ENCODE measurements at regions of chr1 and their contacts with region 1.

Region 1: GRCh38 chr1:205591522-205592351 is 40.1 kb downstream of the ELK4 start:
- DNase-seq: peak; percentile 58 to 100
- H3K4me3 ChIP-seq: peak overlapping the region; percentile 26 to 57 (median 36); a peak in 5 of 8 replicates
- H3K27ac ChIP-seq: no peak overlapping the region
- H3K4me1 ChIP-seq: peaks cover 0 to 7% (median 4%) of the 10 kb centered on the region in 4 experiments; a peak in 5 of 7 replicates
- H3K27me3 ChIP-seq: 0 out of 7 replicates have a peak, but pooled peaks cover 0 to 2% (median 0%) of the 10 kb centered on the region in 4 experiments
- CTCF ChIP-seq: peak; percentile 91 to 99 (median 94)
- EP300 ChIP-seq: no peak
- POLR2A ChIP-seq: 0 out of 3 replicates have a peak, but pooled peaks of 1 of the 2 experiments have one; percentile 39
- RAD21 ChIP-seq: peak; percentile 98

Region 2: GRCh38 chr1:205137901-205138300 is 453.8 kb before region 1 on chr1:
- CTCF ChIA-PET with region 1: no interaction called
- POLR2A ChIA-PET with region 1: no interaction called
- DNase-seq: no peak
- H3K4me3 ChIP-seq: no peak overlapping the region
- H3K27ac ChIP-seq: no peak overlapping the region
- H3K4me1 ChIP-seq: peaks cover 0 to 3% (median 0%) of the 10 kb centered on the region in 4 experiments; a peak in 2 of 7 replicates
- H3K27me3 ChIP-seq: no peaks in the 10 kb centered on the region
- CTCF ChIP-seq: no peak
- EP300 ChIP-seq: no peak
- POLR2A ChIP-seq: no peak
- RAD21 ChIP-seq: no peak

Region 3: DNA sequence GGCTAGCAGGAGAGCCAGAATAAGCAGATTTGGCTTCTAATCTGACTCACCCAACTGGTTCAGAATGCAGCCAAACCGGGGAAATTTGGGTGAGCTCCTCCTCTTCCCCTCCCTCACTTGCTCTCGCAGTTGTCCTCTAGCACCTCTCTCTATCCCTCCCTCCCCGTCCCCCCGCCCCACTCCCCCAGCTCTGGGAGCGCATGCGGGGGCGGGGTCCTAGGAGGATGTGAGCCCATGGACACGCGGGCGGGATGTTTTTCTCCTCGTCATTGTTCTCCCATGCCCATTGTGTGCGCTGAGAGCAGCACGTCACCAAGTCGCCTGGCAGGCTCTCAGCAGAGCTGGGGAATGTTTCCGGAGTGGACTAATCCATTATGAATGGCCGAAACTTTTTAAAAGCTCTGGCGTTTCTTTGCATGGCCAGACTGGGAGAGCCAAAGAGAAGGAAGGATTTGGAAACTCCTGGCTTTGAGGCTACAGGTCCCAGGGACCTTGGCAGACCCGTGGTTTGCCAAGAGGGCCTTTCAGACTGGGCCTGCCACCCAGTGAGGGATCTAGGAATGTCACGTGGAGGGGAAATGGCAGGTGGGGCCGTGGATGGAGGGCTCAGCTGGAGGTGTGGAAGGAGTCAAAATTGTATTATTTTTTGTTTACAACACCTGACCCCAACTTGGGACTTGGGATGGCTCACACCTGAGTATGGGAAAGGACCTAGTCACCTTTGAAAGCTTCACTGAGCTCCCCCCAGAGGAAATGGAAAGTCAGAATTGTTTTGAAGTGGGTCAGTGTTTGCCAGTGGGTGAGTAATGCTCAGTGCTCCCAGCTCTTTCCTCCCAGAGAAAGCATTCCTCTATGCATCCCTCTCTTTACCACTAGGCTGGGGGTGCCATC is 48.1 kb before region 1 on chr1:
- CTCF ChIA-PET with region 1: interaction called, 13 read pairs
- POLR2A ChIA-PET with region 1: interaction called, 3 read pairs
- DNase-seq: peak; percentile 50 to 80
- H3K4me3 ChIP-seq: peak overlapping the region; percentile 12 to 52 (median 28); a peak in 7 of 8 replicates
- H3K27ac ChIP-seq: no peak overlapping the region; the same call in 1 of the 2 replicates
- H3K4me1 ChIP-seq: peaks cover 0 to 14% (median 7%) of the 10 kb centered on the region in 4 experiments; a peak in 5 of 7 replicates
- H3K27me3 ChIP-seq: peaks cover 0 to 26% (median 13%) of the 10 kb centered on the region in 4 experiments; a peak in 6 of 7 replicates
- CTCF ChIP-seq: no peak
- EP300 ChIP-seq: no peak
- POLR2A ChIP-seq: no peak
- RAD21 ChIP-seq: no peak

Region 4: GRCh38 chr1:205561501-205562203 is 30.1 kb before region 1 on chr1:
- CTCF ChIA-PET with region 1: interaction called, 11 read pairs
- POLR2A ChIA-PET with region 1: no interaction called
- DNase-seq: no peak
- H3K4me3 ChIP-seq: no peak overlapping the region
- H3K27ac ChIP-seq: no peak overlapping the region
- H3K4me1 ChIP-seq: no peaks in the 10 kb centered on the region
- H3K27me3 ChIP-seq: no peaks in the 10 kb centered on the region; a peak in 2 of 7 replicates
- CTCF ChIP-seq: no peak
- EP300 ChIP-seq: no peak
- POLR2A ChIP-seq: no peak
- RAD21 ChIP-seq: no peak

Region 5: DNA sequence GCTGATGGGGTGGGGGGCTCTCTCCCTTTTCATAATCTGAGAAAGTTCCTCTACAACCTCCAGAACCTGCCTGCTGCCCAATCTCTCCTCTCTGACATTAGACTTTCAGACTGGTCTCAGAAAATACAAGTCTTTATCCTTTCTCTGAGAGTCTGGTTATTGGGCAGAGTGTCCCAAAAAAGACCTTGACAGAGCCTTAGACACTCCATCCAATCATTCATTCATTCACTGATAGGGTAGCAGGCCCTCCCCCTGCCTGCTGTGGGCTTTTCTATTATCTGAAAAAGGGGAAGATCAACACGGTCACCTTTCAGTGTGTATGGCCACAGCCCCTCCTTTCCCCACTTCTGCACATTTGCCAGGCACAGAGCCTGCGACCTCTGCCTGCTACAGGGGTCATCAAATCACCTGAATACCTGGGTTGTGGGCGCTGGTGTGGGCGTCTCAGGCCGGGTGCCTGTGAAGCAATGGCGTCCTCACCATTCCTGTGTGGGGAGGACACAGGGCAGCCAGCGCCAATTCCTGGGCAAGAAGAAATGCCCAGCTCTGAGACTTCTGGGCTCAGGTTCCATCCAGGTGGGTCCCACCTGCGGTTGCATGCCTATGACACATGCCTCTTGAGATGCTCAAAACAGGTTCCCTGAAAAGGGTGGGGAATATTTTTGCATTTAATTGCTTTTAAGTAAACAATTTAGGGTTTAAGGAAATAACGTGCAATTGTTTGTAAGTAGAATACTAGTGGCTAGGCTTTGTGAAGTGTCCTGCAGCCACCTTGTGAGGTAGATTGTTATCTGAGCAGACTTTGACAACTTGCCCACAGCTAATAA is 12.7 kb before region 1 on chr1:
- CTCF ChIA-PET with region 1: interaction called, 30 read pairs
- POLR2A ChIA-PET with region 1: interaction called, 3 read pairs
- DNase-seq: no peak
- H3K4me3 ChIP-seq: no peak overlapping the region
- H3K27ac ChIP-seq: no peak overlapping the region
- H3K4me1 ChIP-seq: peaks cover 0 to 11% (median 0%) of the 10 kb centered on the region in 4 experiments; a peak in 4 of 7 replicates
- H3K27me3 ChIP-seq: peaks cover 0 to 8% (median 3%) of the 10 kb centered on the region in 4 experiments; a peak in 4 of 7 replicates
- CTCF ChIP-seq: no peak
- EP300 ChIP-seq: no peak
- POLR2A ChIP-seq: no peak
- RAD21 ChIP-seq: no peak

Region 6: GRCh38 chr1:205623646-205624045 is 31.9 kb after region 1 on chr1:
- CTCF ChIA-PET with region 1: interaction called, 16 read pairs
- POLR2A ChIA-PET with region 1: interaction called, 9 read pairs
- DNase-seq: no peak
- H3K4me3 ChIP-seq: no peak overlapping the region
- H3K27ac ChIP-seq: no peak overlapping the region
- H3K4me1 ChIP-seq: no peaks in the 10 kb centered on the region
- H3K27me3 ChIP-seq: no peaks in the 10 kb centered on the region
- CTCF ChIP-seq: no peak
- EP300 ChIP-seq: no peak
- POLR2A ChIP-seq: no peak
- RAD21 ChIP-seq: no peak

Region 7: GRCh38 chr1:205645519-205645918 is 53.8 kb after region 1 on chr1:
- CTCF ChIA-PET with region 1: interaction called, 80 read pairs
- POLR2A ChIA-PET with region 1: interaction called, 3 read pairs
- DNase-seq: no peak
- H3K4me3 ChIP-seq: no peak overlapping the region
- H3K27ac ChIP-seq: no peak overlapping the region
- H3K4me1 ChIP-seq: peaks cover 2 to 8% (median 4%) of the 10 kb centered on the region in 4 experiments; a peak in 4 of 7 replicates
- H3K27me3 ChIP-seq: no peaks in the 10 kb centered on the region
- CTCF ChIP-seq: peak in 1 of 3 experiments; percentile 6; a peak in 1 of 4 replicates
- EP300 ChIP-seq: no peak
- POLR2A ChIP-seq: no peak
- RAD21 ChIP-seq: no peak

Region 8: GRCh38 chr1:205711104-205712020 is 119.6 kb after region 1 on chr1:
- CTCF ChIA-PET with region 1: interaction called, 99 read pairs
- POLR2A ChIA-PET with region 1: interaction called, 4 read pairs
- DNase-seq: no peak
- H3K4me3 ChIP-seq: no peak overlapping the region
- H3K27ac ChIP-seq: peak overlapping the region; percentile 12; the same call in 1 of the 2 replicates
- H3K4me1 ChIP-seq: peaks cover 0 to 3% (median 1%) of the 10 kb centered on the region in 4 experiments; a peak in 2 of 7 replicates
- H3K27me3 ChIP-seq: no peaks in the 10 kb centered on the region
- CTCF ChIP-seq: peak in 2 of 3 experiments; percentile 85 to 86; a peak in 3 of 4 replicates
- EP300 ChIP-seq: no peak
- POLR2A ChIP-seq: no peak
- RAD21 ChIP-seq: peak; percentile 94 to 95

Measured in H1 (cell line).